Mucosa of descending colon (tissue), 3 donors: ENCODE measurements at regions of chr1 and their contacts with region 1.

Region 1: GRCh38 chr1:211578640-211579433 is at the start of gene SLC30A1:
- DNase-seq: peak; percentile 99 to 100 (median 100)
- ATAC-seq: peak; percentile 92
- H3K4me3 ChIP-seq: peak within 1 kb of the TSS; percentile 94
- H3K4me1 ChIP-seq: peaks cover 12% of the 10 kb centered on the region
- CTCF ChIP-seq: no peak
- total RNA-seq, gene SLC30A1: 20.8 to 43.5 (median 29.2) TPM

Region 2: GRCh38 chr1:211648980-211649934 is 70.4 kb after region 1 on chr1:
- intact Hi-C with region 1: loop called in 1 of 2 experiments (anchors 10 kb)
- DNase-seq: peak in 2 of 3 donors; percentile 61 to 77
- ATAC-seq: peak; percentile 82
- H3K4me3 ChIP-seq: no peak overlapping the region
- H3K4me1 ChIP-seq: peaks cover 17% of the 10 kb centered on the region
- CTCF ChIP-seq: peak; percentile 42

Region 3: GRCh38 chr1:211705467-211706091 is 126.7 kb after region 1 on chr1:
- intact Hi-C with region 1: no loop called
- DNase-seq: no peak
- ATAC-seq: no peak
- H3K4me3 ChIP-seq: no peak overlapping the region
- H3K4me1 ChIP-seq: no peaks in the 10 kb centered on the region
- CTCF ChIP-seq: no peak